ENCODE measurements at regions of chr17 and their contacts with region 1.

Region 1: GRCh38 chr17:68600067-68600930 is 868 bp downstream of the FAM20A start:
- DNase-seq: peak; percentile 76

Region 2: DNA sequence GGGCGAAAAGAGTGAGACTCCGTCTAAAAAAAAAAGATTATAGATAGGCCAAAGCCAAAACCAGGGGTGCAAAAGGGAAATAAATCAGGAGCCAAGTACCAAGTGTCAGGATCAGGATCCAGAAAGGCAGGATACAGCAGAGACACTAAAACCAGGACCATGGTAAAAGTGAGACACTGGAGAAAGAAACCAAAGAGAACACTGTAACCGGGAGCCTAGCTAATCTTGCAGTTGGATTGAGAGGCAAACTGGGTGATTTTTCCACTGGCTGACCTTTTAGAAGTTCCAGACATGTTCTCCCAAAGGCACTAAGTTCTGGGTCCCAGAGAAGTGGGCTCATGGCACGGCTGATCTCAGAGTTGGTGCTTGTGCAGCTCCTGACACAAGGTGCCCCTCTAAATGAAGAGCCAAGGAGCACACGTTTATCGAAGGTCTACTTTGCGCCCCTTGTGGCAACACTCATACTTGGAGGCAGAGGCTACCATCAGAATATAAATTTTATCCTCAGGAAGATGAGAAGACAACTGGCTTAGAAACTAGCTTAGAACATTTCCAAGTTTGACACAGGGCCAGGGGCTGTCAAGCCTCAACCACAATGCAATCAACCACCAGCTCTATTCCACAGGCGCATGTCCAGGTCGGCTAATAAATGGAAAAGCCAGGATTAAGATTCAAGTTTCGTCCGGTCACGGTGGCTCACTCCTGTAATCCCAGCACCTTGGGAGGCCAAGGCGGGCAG is 1327.8 kb before region 1 on chr17:
- intact Hi-C with region 1: no loop called
- DNase-seq: no peak

Region 3: DNA sequence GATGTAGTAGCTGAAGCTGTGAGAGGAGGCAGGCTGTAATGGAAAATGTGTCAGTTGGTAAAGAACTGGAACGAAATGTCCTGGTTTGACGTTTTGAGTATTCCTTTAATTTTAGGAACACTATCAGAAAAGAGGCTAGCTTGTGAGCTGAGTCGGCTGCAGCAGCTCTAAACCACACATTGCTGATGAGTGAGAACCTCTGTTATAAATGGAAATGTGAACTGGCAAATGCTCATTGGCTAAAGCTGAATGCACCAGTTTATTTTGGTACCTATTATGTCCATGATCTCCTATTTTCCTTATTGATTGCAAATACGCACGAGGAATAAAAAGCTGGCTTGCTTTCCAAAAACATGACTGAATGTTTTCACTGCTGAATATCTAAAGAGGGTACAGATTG is 132.0 kb before region 1 on chr17:
- intact Hi-C with region 1: loop called (anchors 5 kb)
- DNase-seq: no peak

Region 4: DNA sequence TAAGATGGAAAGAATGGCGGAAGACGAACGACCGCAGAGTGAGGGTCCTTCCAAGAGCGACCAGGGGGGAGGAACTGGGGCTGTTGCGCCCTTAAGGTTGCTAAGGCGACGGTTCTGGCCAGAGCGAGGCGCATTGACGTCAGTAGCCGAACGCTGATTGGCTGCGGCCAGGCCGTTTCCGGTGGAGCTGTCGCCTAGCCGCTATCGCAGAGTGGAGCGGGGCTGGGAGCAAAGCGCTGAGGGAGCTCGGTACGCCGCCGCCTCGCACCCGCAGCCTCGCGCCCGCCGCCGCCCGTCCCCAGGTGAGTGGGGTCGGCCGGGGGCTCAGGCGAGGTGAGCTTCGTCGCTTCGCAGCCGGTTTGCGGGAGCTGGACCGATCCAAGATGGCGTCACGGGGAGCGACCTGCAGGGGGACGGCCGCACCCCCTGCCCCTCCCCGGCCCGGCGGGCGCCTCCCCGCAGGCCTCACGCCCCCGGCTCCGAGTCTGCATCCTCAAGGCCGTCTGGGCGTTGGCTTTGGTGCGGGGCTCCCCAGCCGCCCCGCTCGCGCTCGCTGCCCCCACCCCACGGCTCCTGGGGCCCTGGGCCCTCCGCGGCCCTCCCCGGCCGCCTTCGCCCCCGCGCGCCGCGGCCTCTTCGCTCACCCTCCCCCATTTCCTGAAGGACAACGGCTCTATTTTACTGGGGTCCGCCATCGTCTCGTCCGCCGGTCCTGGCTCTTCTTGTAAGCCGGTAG is 87.9 kb before region 1 on chr17 and contains the start of gene PRKAR1A:
- intact Hi-C with region 1: loop called (anchors 5 kb)
- DNase-seq: peak; percentile 99
- total RNA-seq, gene PRKAR1A: 967 TPM

Region 5: DNA sequence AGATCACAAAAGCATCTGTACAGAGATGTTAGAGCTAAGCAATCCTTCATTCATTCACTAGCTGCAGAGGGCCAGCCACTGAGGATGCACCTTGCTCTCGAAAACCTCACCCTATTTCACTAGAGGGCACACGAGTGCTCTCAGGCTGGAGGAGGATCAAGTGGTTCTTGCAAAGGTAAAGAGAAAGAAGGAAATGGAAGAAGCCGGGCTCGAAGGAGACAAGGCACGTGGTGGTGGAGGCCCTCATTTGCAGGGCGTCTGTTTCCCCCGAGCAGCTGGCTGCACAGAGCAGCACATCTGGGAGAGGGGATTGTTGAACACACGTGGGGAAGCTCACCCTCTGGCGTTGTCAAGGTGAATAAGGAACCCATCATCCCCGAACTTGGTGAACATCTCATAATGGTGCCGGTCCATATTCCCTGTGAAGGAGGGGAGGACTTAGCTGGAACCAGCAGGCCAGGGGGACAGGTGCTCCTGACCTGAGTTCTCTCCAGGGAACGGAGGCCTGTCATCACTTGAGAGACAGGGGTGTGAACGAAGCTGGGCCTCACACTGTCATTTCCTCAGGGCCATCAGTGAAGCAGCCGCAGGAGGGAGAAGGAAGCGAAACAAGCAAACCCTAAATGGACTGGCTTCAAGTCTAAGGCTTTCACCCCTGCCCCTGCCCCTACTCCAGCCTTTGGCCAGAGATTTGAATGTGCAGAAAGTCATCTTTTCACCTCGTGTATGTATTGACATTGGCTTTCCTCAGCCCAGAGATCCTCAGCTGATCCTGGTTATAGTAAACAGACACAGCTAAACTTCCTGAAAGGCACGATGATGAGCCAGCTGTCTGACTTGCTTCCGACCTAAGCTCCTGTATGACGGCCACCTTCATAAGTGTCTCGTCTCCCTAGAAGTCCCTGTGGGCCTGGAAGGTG is 60.5 kb before region 1 on chr17:
- intact Hi-C with region 1: loop called (anchors 5 kb)
- DNase-seq: no peak

Region 6: GRCh38 chr17:68759343-68760132 is 159.2 kb after region 1 on chr17:
- intact Hi-C with region 1: loop called (anchors 10 kb)
- DNase-seq: peak; percentile 87

Measured in cardiac septum (tissue), 1 donor.